Activated CD4-positive, alpha-beta T cell treated with anti-CD3 and anti-CD28 coated beads for 36 hours (primary cell): ENCODE measurements at regions of chr16 and their contacts with region 1.

Region 1: DNA sequence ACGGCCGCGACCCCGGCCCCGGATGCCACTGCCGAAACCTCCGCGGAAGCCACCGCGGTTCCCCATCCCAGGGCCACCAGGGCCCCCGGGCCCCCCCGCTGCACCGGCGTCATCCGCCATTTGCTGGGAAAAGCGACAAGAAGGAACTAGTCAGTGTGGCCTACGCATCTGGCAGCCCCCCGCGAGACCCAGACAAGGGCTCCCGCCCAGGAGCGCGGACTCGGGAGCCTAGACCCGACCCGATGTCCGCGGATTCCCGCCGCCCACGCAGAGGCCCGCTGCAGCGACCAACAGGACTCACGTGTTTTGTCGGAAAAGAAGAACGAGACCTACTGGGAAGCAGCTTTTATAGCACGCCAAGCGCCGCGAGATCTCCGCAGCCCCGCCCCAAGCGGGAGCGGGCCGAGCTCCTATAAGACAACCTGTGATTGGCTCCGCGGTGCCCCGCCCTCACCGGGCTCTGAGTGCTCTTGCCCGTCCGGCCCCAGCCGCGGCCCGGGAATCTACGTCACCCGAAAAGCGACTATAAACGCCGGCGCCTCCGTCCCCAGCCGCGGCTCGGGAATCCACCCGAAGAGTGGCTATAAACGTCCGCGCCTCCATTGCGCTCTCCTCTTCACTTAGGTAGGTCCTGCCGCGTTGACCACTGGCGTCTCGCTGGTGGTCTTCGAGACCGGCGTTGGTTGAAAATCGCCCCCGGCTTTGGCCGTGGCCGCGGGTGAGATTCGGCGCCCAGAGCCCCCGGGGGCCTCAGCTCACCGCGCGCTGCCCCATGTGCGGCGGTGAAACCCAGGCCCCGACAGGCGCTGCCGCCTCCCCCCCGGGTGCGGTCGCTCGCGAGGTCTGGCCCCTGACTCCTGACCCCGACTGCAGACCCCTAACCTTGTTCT is at the start of gene RPS2:
- DNase-seq: peak; percentile 100
- ATAC-seq: peak; percentile 81
- H3K4me3 Mint-ChIP-seq: peak within 1 kb of the TSS; percentile 96
- H3K27ac Mint-ChIP-seq: peak within 1 kb of the TSS; percentile 99
- H3K4me1 Mint-ChIP-seq: peaks cover 38% of the 10 kb centered on the region
- H3K27me3 Mint-ChIP-seq: no peaks in the 10 kb centered on the region
- total RNA-seq, gene RPS2: 5,351 to 6,287 TPM

Region 2: DNA sequence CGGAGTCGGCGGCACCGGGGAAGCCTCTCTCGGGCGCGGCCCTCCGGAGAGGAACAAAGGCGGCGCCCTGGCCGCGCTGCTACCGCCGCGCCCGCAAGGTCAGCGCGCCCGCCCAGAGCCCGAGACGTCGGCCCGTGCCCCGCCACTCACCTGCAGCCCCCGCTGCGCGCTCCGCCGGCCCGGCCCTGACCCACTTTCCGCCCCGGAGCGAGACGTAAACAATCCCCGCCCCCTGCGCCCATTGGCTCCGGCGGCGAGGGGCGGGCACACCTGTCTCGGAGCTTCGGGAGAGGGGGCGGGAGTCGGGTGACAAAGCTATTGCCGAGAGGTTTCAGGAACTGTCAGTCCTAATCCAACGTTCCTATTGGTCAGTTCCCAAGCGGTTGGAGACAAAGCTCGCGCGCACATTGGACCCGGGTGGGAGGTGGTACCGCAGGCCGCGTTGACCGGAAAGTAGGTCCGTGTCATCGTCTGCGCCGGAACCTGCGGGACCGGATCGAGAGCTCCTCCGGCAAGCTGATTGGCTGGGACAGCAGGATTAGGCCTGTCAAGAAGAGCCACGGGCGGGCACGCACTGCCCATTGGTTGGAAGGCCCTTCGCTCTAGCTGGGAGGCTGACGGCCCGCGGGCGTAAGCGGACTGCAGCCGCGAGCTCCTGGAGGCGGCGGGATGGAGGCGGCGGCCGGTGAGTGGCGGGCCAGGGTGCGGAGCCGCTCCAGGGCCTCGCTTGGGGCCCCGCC is 182.2 kb before region 1 on chr16 and contains the starts of genes NUBP2 and SPSB3:
- CTCF ChIA-PET with region 1: interaction called, 4 read pairs
- POLR2A ChIA-PET with region 1: interaction called, 6 read pairs
- intact Hi-C with region 1: loop called in 1 of 2 experiments (anchors 1 kb)
- DNase-seq: peak; percentile 99
- ATAC-seq: peak; percentile 93
- H3K4me3 Mint-ChIP-seq: peak within 1 kb of the TSS; percentile 94
- H3K27ac Mint-ChIP-seq: peak within 1 kb of the TSS; percentile 85
- H3K4me1 Mint-ChIP-seq: peaks cover 26% of the 10 kb centered on the region
- H3K27me3 Mint-ChIP-seq: no peaks in the 10 kb centered on the region
- total RNA-seq, gene NUBP2: 34.4 to 42.4 TPM
- total RNA-seq, gene SPSB3: 12.5 to 13.6 TPM

Region 3: GRCh38 chr16:1983544-1984346 is 19.0 kb after region 1 on chr16 and contains the start of gene GFER:
- CTCF ChIA-PET with region 1: interaction called, 5 read pairs
- POLR2A ChIA-PET with region 1: interaction called, 10 read pairs
- intact Hi-C with region 1: no loop called
- DNase-seq: peak; percentile 84
- ATAC-seq: peak; percentile 84
- H3K4me3 Mint-ChIP-seq: peak within 1 kb of the TSS; percentile 85
- H3K27ac Mint-ChIP-seq: peak within 1 kb of the TSS; percentile 55
- H3K4me1 Mint-ChIP-seq: peaks cover 16% of the 10 kb centered on the region
- H3K27me3 Mint-ChIP-seq: peaks cover 20% of the 10 kb centered on the region
- total RNA-seq, gene GFER: 25.0 to 25.8 TPM